ENCODE measurements at regions of chr19 and their contacts with region 1.

Region 1: GRCh38 chr19:1663852-1664251 is 11.4 kb upstream of the TCF3 start:
- DNase-seq: no peak
- ATAC-seq: no peak
- H3K4me3 ChIP-seq: no peak overlapping the region
- H3K27ac ChIP-seq: no peak overlapping the region
- H3K4me1 ChIP-seq: peaks cover 0 to 6% (median 5%) of the 10 kb centered on the region in 9 donors
- H3K27me3 ChIP-seq: peaks cover 6 to 53% (median 36%) of the 10 kb centered on the region in 7 donors
- CTCF ChIP-seq: no peak

Region 2: DNA sequence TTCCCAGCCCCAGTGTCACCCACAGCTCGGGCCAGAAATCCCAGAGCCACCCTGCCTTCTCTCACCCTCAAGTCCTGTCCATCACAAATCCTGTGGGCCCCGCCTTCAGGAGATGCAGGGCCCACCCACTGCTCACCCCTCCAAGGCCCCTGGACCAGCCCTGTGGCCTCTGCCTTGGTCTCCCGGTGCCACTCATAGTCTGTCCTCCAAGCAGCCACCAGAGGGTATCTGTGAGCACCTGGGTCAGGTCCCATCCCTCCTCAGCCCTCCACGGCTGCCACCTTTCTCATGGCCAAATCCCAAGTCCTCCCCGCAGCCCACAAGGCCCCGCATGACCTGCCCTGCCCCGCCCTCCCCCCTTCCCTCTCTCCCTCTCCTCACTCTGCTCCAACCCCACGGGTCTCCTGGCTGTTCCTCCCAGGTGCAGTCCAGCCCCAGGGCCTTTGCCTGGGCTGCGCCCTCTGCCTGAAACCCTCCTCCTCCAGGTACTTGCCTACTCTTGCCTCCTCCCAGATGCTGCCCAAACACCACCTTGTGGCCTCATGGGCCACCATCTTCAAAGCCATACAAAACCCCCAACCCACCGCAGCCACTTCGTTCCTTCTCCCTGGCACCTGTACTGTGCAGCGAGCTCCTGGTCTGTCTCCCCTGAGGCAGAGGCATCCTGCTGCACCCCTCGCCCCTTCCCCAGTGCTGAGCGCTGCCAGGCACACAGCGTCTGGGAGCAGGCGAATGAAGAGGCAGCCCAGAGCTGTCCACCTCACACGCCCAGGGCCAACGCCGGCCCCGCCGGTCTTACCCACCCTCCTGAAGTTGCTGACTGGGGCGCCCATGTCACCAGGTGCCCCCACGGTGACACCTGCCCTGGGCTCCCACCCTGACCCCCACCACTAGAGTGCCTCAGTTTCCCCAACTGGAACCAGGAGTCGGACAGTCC is 45.4 kb before region 1 on chr19:
- intact Hi-C with region 1: loop called in 1 of 10 experiments (anchors 5 kb)
- DNase-seq: peak in 1 of 2 donors; percentile 38
- ATAC-seq: peak in 7 of 8 donors; percentile 43 to 79 (median 66)
- H3K4me3 ChIP-seq: no peak overlapping the region
- H3K27ac ChIP-seq: peak overlapping the region in 6 of 10 donors; percentile 22 to 51 (median 38)
- H3K4me1 ChIP-seq: peaks cover 0 to 25% (median 8%) of the 10 kb centered on the region in 9 donors
- H3K27me3 ChIP-seq: no peaks in the 10 kb centered on the region
- CTCF ChIP-seq: peak in 7 of 9 donors; percentile 10 to 52 (median 41)

Measured in heart right ventricle (tissue), 16 donors.